Aorta (tissue), 5 donors: ENCODE measurements at regions of chr13 and their contacts with region 1.

Region 1: DNA sequence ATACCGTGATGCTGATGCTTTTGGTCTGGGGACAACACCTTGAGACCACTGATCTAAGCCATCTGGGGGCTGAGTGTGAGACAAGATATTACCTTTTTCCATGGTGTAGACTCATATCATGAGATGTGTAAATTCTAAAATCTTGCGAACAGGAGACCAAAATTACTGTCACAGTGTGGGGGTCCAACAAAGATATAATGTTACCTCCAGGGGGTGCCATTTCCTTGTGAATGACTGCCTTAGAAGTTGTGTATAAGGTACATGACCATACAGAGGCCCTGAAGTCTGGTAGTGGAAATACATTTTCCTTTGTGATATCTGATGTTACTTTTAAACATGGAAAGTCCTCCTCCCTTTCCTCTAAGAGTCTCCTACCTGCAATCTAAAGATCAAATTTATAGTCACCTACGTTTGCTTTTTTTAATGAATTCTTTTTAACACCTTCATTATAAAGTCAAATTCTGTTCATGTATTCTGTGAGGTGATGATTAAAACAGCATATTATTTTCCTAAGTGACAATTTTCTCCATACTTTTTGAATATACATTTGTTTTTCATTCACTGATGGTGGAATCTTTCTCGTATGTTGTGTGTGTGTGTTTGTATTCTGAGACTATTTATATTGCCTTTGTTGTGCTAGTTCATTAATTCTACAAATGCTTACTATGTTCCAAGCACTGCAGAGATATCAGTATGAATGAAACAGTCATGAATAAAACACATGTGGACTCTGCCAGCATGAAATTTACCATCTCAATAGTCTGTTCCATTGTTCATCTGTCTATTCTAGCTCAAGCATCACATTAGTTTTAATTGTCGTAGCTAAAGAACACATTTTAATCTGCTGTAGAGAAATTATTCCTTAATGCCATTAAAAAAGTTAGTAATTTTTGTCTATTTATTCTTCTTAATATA is 113.7 kb downstream of the RFC3 start:
- DNase-seq: no peak
- ATAC-seq: no peak
- H3K4me3 ChIP-seq: no peak overlapping the region
- H3K27ac ChIP-seq: no peak overlapping the region
- H3K4me1 ChIP-seq: no peaks in the 10 kb centered on the region
- H3K27me3 ChIP-seq: no peaks in the 10 kb centered on the region

Region 2: GRCh38 chr13:35157143-35157755 is 1225.6 kb after region 1 on chr13:
- intact Hi-C with region 1: loop called (anchors 2 to 5 kb)
- DNase-seq: no peak
- ATAC-seq: peak; percentile 78
- H3K4me3 ChIP-seq: no peak overlapping the region
- H3K27ac ChIP-seq: no peak overlapping the region
- H3K4me1 ChIP-seq: no peaks in the 10 kb centered on the region
- H3K27me3 ChIP-seq: no peaks in the 10 kb centered on the region

Region 3: DNA sequence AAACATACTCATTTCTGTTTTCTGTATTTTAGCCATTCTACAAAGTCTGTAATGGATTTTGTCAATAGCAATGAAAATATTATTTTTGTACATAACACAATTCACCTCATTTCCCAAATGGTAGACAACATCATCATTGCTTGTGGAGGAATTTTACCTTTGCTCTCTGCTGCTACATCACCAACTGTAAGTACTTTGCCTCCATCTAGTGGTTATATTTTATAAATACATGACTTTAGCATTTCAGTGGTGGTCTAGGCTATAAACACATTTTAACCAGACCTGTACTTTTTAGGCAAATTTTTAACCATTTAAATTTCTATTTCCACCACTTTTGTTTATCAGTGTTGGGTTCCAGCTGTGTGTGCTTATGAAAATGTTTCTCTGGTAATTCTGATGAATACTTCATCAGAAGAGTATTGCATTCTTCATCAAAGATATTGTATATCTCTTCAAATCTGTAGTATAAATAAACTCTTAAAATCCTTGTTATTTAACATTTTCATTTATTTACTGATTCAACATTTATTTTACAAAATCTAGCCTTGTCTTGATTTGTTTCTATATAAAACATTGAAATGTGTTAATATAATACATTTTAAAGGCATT is 1232.8 kb after region 1 on chr13:
- intact Hi-C with region 1: loop called in 1 of 2 experiments (anchors 5 kb)
- DNase-seq: no peak
- ATAC-seq: no peak
- H3K4me3 ChIP-seq: no peak overlapping the region
- H3K27ac ChIP-seq: no peak overlapping the region
- H3K4me1 ChIP-seq: no peaks in the 10 kb centered on the region
- H3K27me3 ChIP-seq: no peaks in the 10 kb centered on the region